ENCODE measurements at regions of chr1 and their contacts with region 1.

Region 1: GRCh38 chr1:36306902-36307456 is 811 bp downstream of the SH3D21 start:
- DNase-seq: peak; percentile 93
- H3K4me3 Mint-ChIP-seq: peak overlapping the region; percentile 72
- H3K27ac Mint-ChIP-seq: no peak overlapping the region
- H3K4me1 Mint-ChIP-seq: peaks cover 6% of the 10 kb centered on the region
- H3K27me3 Mint-ChIP-seq: no peaks in the 10 kb centered on the region
- CTCF ChIP-seq: no peak

Region 2: GRCh38 chr1:36323597-36324352 is 16.8 kb after region 1 on chr1 and contains the start of gene EVA1B:
- CTCF ChIA-PET with region 1: interaction called, 6 read pairs
- POLR2A ChIA-PET with region 1: interaction called, 12 read pairs
- intact Hi-C with region 1: no loop called
- DNase-seq: peak; percentile 50
- H3K4me3 Mint-ChIP-seq: peak within 1 kb of the TSS; percentile 19
- H3K27ac Mint-ChIP-seq: no peak within 1 kb of the TSS
- H3K4me1 Mint-ChIP-seq: peaks cover 23% of the 10 kb centered on the region
- H3K27me3 Mint-ChIP-seq: no peaks in the 10 kb centered on the region
- CTCF ChIP-seq: no peak
- total RNA-seq, gene EVA1B: 4.8 and 5.7 TPM in 2 replicates

Region 3: GRCh38 chr1:36350659-36351226 is 43.8 kb after region 1 on chr1:
- CTCF ChIA-PET with region 1: interaction called, 3 read pairs
- POLR2A ChIA-PET with region 1: interaction called, 10 read pairs
- intact Hi-C with region 1: no loop called
- DNase-seq: peak; percentile 77
- H3K4me3 Mint-ChIP-seq: peak overlapping the region; percentile 15
- H3K27ac Mint-ChIP-seq: peak overlapping the region; percentile 82
- H3K4me1 Mint-ChIP-seq: peaks cover 39% of the 10 kb centered on the region
- H3K27me3 Mint-ChIP-seq: no peaks in the 10 kb centered on the region
- CTCF ChIP-seq: no peak

Region 4: DNA sequence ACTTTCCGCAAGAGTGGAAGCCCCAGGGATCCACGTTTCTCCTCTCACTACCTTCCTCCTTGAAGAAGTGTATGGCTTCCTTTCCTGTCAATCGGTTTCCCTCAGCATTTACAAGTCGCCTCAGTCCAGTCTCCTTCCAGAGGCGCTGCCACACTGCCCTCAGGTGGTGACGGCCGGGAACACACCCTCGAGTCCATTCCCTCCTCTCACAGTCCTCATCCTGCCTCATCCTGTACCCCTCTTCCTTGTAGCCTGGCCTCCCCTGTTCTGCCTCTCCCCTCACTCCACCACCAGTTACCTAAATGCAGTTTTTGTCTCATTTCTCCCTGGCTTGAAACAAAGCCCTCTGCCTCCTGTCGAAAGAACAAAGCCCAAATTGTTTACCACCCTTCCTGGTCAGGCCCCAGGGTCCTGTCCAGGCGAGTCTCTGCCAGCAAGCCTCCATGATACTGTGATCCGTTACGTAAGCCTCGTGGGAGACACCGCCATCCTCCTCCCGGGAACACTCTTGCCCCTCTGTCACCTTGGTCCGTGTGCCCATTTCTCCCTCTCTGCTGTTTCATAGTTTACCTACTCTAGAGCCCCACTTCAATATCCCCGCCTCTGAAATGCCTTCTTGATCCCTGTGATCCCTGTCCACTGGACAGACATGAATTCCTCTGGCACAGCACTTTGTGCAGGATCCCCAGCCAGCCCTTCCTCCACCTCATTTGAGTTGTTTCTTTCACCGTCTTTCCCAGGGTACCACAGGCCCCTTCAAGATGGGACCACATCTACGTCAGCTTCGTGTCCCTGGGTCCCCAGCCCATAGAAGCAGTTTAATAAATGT is 114.1 kb after region 1 on chr1:
- CTCF ChIA-PET with region 1: interaction called, 4 read pairs
- POLR2A ChIA-PET with region 1: interaction called, 5 read pairs
- intact Hi-C with region 1: loop called (anchors 2 kb)
- DNase-seq: peak; percentile 83
- H3K4me3 Mint-ChIP-seq: no peak overlapping the region
- H3K27ac Mint-ChIP-seq: peak overlapping the region; percentile 76
- H3K4me1 Mint-ChIP-seq: peaks cover 14% of the 10 kb centered on the region
- H3K27me3 Mint-ChIP-seq: no peaks in the 10 kb centered on the region
- CTCF ChIP-seq: peak; percentile 96